Common myeloid progenitor, CD34-positive (primary cell): ENCODE measurements at regions of chr19 and their contacts with region 1.

Region 1: GRCh38 chr19:10403137-10404021 is at the start of gene CDC37:
- DNase-seq: peak; percentile 95 to 98 (median 97)
- H3K4me3 ChIP-seq: peak within 1 kb of the TSS; percentile 72 to 100 (median 94)
- H3K27ac ChIP-seq: peak within 1 kb of the TSS; percentile 74 to 90
- H3K4me1 ChIP-seq: peaks cover 16 to 57% (median 47%) of the 10 kb centered on the region in 4 experiments
- H3K27me3 ChIP-seq: peaks cover 0 to 19% (median 0%) of the 10 kb centered on the region in 5 experiments

Region 2: GRCh38 chr19:10388957-10389356 is 14.4 kb before region 1 on chr19:
- CTCF ChIA-PET with region 1: interaction called, 37 read pairs
- POLR2A ChIA-PET with region 1: interaction called, 4 read pairs
- DNase-seq: peak; percentile 71 to 83 (median 75)
- H3K4me3 ChIP-seq: no peak overlapping the region
- H3K27ac ChIP-seq: no peak overlapping the region
- H3K4me1 ChIP-seq: peaks cover 0 to 5% (median 0%) of the 10 kb centered on the region in 4 experiments
- H3K27me3 ChIP-seq: no peaks in the 10 kb centered on the region

Region 3: DNA sequence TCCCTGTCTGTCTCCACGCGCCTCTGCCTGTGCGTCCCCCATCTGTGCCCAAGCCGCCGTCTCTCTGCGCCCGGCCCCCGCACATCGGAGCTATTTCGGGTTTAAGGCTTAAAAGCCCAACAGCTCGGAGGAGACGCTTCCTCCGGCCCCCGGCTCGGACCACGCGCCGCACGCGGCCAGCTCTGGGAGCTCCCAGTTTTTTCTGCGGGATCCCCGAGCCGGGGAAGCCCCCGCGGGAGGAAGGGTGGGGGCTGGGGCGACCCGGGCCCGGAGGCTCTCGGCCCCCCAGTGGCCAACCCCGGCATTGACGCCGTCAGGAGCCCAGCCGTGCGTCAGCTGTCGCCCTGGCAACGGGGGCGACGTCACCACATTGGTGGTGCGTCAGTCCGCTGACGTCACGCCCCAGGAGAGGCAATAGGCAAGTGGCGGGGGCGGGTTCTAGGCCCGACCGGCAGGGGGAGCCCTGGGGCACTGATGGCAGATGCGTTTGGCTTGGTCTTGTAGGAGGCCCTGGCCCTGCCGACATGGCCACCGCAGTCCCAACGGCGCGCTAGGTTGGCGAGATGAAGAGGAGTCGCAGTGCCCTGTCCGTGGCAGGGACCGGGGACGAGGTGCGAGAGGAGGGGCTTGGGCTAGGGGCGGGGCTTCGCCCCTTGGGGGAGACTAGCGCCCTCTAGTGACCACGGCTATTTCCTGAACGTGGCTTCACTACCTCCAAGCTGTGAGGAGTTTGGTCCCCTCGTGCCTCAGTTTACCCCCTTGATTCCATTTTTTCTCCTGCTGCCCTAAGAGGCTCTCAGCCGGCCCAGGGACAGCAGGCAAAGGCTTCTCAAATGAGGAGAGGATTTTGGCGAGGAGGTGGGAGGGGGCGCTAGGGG is 13.2 kb after region 1 on chr19:
- CTCF ChIA-PET with region 1: interaction called, 102 read pairs
- POLR2A ChIA-PET with region 1: interaction called, 6 read pairs
- DNase-seq: peak; percentile 95 to 97 (median 97)
- H3K4me3 ChIP-seq: peak overlapping the region; percentile 28 to 77 (median 67)
- H3K27ac ChIP-seq: peak overlapping the region in 1 of 2 experiments; percentile 58
- H3K4me1 ChIP-seq: peaks cover 5 to 63% (median 54%) of the 10 kb centered on the region in 4 experiments
- H3K27me3 ChIP-seq: peaks cover 4 to 54% (median 23%) of the 10 kb centered on the region in 5 experiments

Region 4: DNA sequence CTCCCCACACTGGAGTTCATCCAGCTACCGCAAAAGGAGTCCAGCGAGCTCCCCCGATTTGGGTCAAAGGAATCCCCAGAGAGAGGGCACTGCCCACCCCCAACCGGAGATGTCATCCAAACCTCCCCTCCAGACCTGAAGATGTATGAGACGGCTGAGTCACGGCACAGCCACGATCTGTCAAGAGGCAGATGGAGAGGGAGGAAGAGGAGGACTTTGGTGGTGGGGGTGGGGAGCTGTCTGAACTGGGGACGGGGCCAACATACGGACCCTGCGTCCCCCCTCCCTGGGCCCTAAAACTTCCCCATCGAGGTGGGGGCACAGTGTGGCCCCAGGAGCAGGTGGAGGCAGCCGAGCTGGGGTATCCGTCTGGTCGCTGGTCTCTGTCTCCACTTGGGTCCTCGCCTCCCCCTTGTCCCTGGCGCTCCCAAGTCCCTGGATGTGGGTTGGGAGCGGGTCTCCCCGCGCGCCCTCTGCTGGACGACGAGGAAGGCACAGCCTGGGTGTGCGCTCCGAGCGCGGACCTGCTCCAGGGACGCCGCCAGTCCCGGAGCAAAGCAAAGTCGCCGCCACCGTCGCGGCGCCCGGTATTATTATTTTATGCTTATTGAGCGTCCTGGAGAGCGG is 20.7 kb after region 1 on chr19:
- CTCF ChIA-PET with region 1: interaction called, 102 read pairs
- POLR2A ChIA-PET with region 1: interaction called, 3 read pairs
- DNase-seq: peak in 2 of 3 donors; percentile 93 to 94
- H3K4me3 ChIP-seq: peak overlapping the region; percentile 1 to 66 (median 54)
- H3K27ac ChIP-seq: no peak overlapping the region
- H3K4me1 ChIP-seq: peaks cover 12 to 77% (median 65%) of the 10 kb centered on the region in 4 experiments
- H3K27me3 ChIP-seq: peaks cover 7 to 64% (median 25%) of the 10 kb centered on the region in 5 experiments

Region 5: DNA sequence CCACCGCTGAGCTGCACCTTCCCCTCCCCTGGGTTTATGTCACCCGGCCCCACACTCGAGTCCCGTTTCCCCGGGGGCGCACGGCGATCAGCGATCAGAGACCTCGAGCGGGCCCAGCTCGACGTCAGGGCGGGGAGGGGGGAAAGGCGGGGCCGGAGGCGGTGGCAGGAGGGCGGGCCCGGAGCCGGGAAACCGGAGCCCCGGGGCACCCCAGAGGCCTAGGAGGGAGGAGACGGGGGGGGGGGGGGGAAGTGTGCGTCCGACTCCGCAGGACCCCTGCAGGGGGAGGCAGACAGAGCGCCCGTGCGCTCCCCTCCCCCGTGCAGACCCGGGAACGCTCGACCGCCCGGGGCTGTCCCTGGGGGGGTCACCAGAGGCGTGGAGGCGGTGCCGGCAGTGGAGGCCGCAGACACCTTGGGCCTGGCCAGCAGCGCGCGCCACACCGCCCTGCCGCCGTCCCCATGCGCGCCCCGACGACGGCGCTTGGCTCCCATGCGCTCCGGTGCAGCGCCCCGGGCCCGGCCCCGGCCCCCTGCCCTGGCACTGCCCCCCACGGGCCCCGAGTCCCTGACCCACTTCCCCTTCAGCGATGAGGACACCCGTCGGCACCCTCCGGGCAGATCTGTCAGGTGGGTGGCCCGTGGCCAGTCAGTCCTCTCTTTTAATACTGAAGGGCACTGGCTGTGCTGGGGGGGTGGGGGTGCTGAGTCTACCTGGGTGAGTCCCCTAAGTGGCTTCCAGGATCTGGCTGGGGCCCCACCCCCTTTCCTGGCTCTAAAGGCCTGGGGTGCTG is 28.8 kb after region 1 on chr19:
- CTCF ChIA-PET with region 1: interaction called, 76 read pairs
- POLR2A ChIA-PET with region 1: no interaction called
- DNase-seq: peak in 2 of 3 donors; percentile 44 to 58
- H3K4me3 ChIP-seq: peak overlapping the region in 4 of 7 experiments; percentile 23 to 55 (median 41)
- H3K27ac ChIP-seq: no peak overlapping the region
- H3K4me1 ChIP-seq: peaks cover 4 to 39% (median 32%) of the 10 kb centered on the region in 4 experiments
- H3K27me3 ChIP-seq: peaks cover 10 to 52% (median 18%) of the 10 kb centered on the region in 5 experiments

Region 6: DNA sequence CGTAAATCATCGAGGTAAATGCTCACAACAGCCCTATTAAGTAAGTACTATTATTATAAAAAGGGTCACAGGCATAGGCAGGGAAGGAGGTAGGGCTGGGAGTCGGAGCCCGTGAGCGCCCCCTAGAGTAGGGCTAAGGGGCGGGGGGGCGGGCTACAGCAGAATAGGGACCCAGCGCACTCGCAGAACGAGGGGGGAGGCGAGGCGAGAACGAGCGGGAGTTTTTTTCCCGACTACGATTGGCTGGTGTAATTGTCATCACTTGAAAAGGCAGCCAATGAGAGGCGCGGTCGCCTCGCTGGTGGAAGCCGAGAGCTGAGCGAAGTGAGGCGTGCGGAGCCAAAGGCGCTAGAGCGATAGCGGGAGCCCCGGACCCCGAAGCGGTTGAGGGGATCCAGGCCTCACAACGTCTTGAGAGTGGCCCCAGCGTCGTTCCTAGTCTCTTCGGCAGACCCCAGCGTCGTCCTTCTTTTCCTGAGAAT is 75.6 kb after region 1 on chr19:
- CTCF ChIA-PET with region 1: interaction called, 10 read pairs
- POLR2A ChIA-PET with region 1: no interaction called
- DNase-seq: peak; percentile 93 to 98 (median 96)
- H3K4me3 ChIP-seq: peak overlapping the region in 3 of 7 experiments; percentile 30 to 58 (median 43)
- H3K27ac ChIP-seq: no peak overlapping the region
- H3K4me1 ChIP-seq: peaks cover 2 to 19% (median 12%) of the 10 kb centered on the region in 4 experiments
- H3K27me3 ChIP-seq: no peaks in the 10 kb centered on the region